ENCODE measurements at regions of chr19 and their contacts with region 1.

Region 1: GRCh38 chr19:13784731-13785452 is 10.4 kb upstream of the ZSWIM4 start:
- DNase-seq: peak; percentile 54 to 86 (median 70)
- ATAC-seq: peak; percentile 63
- H3K4me3 ChIP-seq: peak overlapping the region; percentile 3
- H3K4me3 Mint-ChIP-seq: peak overlapping the region; percentile 71
- H3K27ac ChIP-seq: no peak overlapping the region
- H3K27ac Mint-ChIP-seq: peak overlapping the region; percentile 84
- H3K4me1 ChIP-seq: peaks cover 52% of the 10 kb centered on the region
- H3K4me1 Mint-ChIP-seq: peaks cover 27% of the 10 kb centered on the region
- H3K27me3 ChIP-seq: no peaks in the 10 kb centered on the region
- H3K27me3 Mint-ChIP-seq: no peaks in the 10 kb centered on the region
- CTCF ChIP-seq: peak; percentile 86

Region 2: GRCh38 chr19:13132471-13133180 is 652.3 kb before region 1 on chr19:
- CTCF ChIA-PET with region 1: no interaction called
- POLR2A ChIA-PET with region 1: no interaction called
- intact Hi-C with region 1: no loop called
- DNase-seq: peak in 6 of 14 experiments; percentile 29 to 69 (median 48)
- ATAC-seq: peak; percentile 95
- H3K4me3 ChIP-seq: no peak overlapping the region
- H3K4me3 Mint-ChIP-seq: no peak overlapping the region
- H3K27ac ChIP-seq: peak overlapping the region in 1 of 2 donors; percentile 15
- H3K27ac Mint-ChIP-seq: peak overlapping the region; percentile 80
- H3K4me1 ChIP-seq: peaks cover 24% of the 10 kb centered on the region
- H3K4me1 Mint-ChIP-seq: peaks cover 33% of the 10 kb centered on the region
- H3K27me3 ChIP-seq: no peaks in the 10 kb centered on the region
- H3K27me3 Mint-ChIP-seq: no peaks in the 10 kb centered on the region
- CTCF ChIP-seq: no peak

Region 3: DNA sequence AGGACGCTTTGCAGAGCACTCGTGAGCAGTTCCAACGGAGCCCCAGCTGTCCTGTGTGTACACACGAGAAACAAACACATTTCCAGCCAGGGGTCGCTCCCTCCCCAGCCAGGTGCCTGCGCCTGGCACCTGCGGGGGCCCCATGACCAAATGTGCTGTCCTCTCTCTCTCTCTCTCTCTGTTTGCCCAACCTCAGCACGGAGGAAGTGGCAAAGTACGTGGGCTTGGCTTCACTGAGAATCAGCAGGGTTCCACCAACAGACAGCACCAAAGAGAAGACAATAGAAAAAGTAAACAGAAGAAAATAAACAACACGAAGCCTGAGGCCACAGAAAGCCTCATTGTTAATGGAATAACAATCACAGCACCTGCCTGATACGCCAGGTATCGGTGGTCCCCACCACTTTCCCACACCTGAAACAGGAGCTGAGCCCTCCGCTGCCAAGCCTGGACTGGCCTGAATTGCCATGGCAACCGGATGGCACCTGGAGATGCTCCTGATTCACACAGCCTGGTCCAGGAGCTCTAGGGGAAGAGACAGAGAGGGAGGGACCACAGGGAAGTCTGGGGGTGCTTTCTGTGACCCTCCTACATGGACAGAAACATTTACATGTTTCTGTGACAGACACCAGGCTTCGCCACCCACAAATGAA is 174.7 kb before region 1 on chr19:
- CTCF ChIA-PET with region 1: no interaction called
- POLR2A ChIA-PET with region 1: no interaction called
- intact Hi-C with region 1: no loop called
- DNase-seq: peak in 1 of 14 experiments; percentile 2
- ATAC-seq: no peak
- H3K4me3 ChIP-seq: no peak overlapping the region
- H3K4me3 Mint-ChIP-seq: no peak overlapping the region
- H3K27ac ChIP-seq: no peak overlapping the region
- H3K27ac Mint-ChIP-seq: no peak overlapping the region
- H3K4me1 ChIP-seq: peaks cover 4% of the 10 kb centered on the region
- H3K4me1 Mint-ChIP-seq: peaks cover 9% of the 10 kb centered on the region
- H3K27me3 ChIP-seq: no peaks in the 10 kb centered on the region
- H3K27me3 Mint-ChIP-seq: peaks cover 32% of the 10 kb centered on the region
- CTCF ChIP-seq: no peak

Region 4: DNA sequence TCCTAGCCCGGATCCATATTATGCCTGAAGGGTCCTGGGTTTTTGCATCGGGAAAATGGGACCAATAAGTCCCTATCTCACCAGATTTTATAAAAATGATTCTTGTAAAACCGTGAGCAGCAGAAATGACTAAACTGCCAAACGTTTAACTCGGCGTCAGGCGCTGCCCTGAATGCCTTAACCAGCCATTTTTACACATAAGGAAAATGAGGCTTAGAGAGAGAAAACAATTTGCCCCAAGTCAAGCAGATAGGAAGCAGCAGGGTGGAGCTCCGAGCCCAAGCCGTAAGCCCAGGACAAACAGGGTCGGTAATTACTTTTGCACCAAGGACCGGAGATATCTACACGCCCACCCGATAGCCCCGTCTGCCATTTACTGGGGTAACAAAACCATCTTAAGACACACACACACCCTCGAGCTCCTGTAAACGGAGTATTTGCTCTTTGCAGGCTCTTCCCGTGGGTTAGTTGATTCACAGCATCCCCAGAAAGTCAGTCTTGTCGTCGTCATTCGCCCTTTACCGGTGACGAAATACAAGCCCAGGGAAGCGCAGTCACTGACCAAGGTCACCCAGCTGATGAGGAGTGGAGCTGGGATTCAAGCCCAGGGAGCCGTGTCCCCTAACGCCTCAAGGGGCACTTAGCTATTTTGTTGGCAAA is 36.6 kb before region 1 on chr19:
- CTCF ChIA-PET with region 1: no interaction called
- POLR2A ChIA-PET with region 1: interaction called, 17 read pairs
- intact Hi-C with region 1: no loop called
- DNase-seq: peak in 7 of 14 experiments; percentile 10 to 58 (median 24)
- ATAC-seq: peak; percentile 15
- H3K4me3 ChIP-seq: peak overlapping the region; percentile 98
- H3K4me3 Mint-ChIP-seq: peak overlapping the region; percentile 91
- H3K27ac ChIP-seq: peak overlapping the region; percentile 79 to 95
- H3K27ac Mint-ChIP-seq: peak overlapping the region; percentile 87
- H3K4me1 ChIP-seq: peaks cover 34% of the 10 kb centered on the region
- H3K4me1 Mint-ChIP-seq: peaks cover 30% of the 10 kb centered on the region
- H3K27me3 ChIP-seq: no peaks in the 10 kb centered on the region
- H3K27me3 Mint-ChIP-seq: no peaks in the 10 kb centered on the region
- CTCF ChIP-seq: no peak

Region 5: GRCh38 chr19:13794757-13795589 is 10.1 kb after region 1 on chr19 and contains the start of gene ZSWIM4:
- CTCF ChIA-PET with region 1: interaction called, 3 read pairs
- POLR2A ChIA-PET with region 1: interaction called, 17 read pairs
- intact Hi-C with region 1: no loop called
- DNase-seq: peak; percentile 66 to 97 (median 90)
- ATAC-seq: peak; percentile 85
- H3K4me3 ChIP-seq: peak within 1 kb of the TSS; percentile 70
- H3K4me3 Mint-ChIP-seq: peak within 1 kb of the TSS; percentile 96
- H3K27ac ChIP-seq: peak within 1 kb of the TSS; percentile 59 to 64
- H3K27ac Mint-ChIP-seq: peak within 1 kb of the TSS; percentile 90
- H3K4me1 ChIP-seq: peaks cover 34% of the 10 kb centered on the region
- H3K4me1 Mint-ChIP-seq: peaks cover 40% of the 10 kb centered on the region
- H3K27me3 ChIP-seq: no peaks in the 10 kb centered on the region
- H3K27me3 Mint-ChIP-seq: no peaks in the 10 kb centered on the region
- CTCF ChIP-seq: no peak
- total RNA-seq, gene ZSWIM4: 3.5 to 3.8 TPM

Region 6: DNA sequence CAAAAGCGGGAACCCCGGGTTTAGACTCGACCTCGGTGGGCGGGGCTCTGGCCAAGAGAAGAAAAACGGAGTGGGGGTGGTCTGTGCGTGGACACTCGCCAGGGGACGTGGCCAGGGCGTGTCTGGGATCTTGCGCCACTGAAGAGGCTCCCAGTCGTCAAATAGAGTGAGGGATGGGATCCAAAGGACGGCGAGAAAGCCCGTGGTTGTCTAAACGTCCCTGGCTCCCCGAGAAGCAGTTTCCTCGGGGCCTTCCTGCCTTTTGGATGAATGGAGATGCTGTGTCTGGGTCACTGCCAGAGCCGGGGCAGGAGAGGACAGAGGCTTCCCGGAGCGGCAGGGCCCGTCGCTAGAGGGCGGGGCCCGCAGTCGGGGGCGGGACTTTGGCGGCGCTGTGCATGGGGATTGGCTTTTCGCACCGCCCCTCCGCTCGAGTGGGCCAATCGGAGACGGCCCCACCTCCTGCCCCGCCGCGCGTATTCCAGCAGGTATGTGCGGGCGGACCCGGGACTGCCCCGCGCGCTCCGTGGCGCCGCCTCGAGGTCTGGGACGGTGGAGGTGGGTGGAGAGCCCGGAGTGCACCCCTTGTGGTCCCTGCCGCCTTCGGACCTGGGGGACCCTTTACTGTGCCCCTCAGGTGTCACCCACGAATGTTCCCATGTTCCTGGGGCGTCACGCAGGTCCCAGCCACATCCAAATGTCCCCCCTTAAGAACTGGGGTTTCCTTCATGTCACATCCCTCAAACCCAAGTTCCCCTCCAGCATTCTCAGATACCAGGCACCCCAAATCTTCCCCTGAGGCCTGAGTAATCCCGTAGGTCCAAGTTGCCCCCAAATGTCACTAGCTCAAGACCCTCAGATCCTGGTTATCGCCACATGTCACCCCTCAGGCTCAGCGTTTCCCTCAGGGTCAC is 48.7 kb after region 1 on chr19:
- CTCF ChIA-PET with region 1: interaction called, 5 read pairs
- POLR2A ChIA-PET with region 1: interaction called, 38 read pairs
- intact Hi-C with region 1: loop called in 1 of 2 experiments (anchors 2 kb)
- DNase-seq: peak; percentile 82 to 97 (median 92)
- ATAC-seq: peak; percentile 84
- H3K4me3 ChIP-seq: peak overlapping the region; percentile 61
- H3K4me3 Mint-ChIP-seq: peak overlapping the region; percentile 89
- H3K27ac ChIP-seq: peak overlapping the region; percentile 62 to 76
- H3K27ac Mint-ChIP-seq: peak overlapping the region; percentile 99
- H3K4me1 ChIP-seq: peaks cover 57% of the 10 kb centered on the region
- H3K4me1 Mint-ChIP-seq: peaks cover 38% of the 10 kb centered on the region
- H3K27me3 ChIP-seq: no peaks in the 10 kb centered on the region
- H3K27me3 Mint-ChIP-seq: no peaks in the 10 kb centered on the region
- CTCF ChIP-seq: peak; percentile 18

Region 7: DNA sequence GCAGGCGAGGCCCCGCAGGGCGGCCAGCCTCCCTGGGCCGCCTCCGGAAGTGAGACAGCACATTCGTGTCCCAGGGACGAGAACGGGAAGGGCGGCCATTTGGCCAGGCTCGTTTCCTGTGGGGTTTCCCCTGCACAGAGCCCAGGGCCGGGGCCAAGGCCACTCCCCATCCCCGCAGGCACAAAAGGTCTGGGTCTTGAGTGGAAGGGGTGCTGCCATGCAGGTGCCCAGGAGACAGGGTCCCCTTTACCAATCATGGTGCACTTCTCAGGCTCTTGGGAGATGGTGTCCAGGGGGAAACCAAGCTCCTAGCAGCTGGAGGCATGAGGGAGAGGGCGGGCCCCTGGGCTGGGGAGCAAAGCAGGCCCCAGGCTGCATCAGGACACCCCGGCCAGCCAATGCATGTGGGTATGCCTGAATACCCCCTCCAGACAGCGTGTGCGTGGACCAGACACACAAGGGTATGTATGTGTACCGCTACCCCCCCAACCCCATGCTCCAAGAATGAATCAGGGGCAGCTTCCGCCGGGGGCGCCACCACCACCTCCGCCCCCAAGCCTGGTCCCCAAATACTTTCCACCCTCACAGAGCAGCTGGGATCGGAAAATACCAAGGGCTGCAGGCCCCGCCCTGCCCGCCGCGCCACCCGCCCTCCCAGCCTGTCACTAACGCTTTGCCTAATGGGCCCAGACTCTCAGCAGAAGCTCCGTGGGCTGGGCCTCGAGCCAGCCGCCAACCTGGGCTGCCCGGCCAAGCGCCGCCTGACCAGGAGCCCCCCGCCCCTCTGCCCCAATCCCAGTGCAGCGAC is 54.4 kb after region 1 on chr19:
- CTCF ChIA-PET with region 1: interaction called, 5 read pairs
- POLR2A ChIA-PET with region 1: interaction called, 38 read pairs
- intact Hi-C with region 1: loop called in 1 of 2 experiments (anchors 2 kb)
- DNase-seq: peak in 13 of 14 experiments; percentile 60 to 90 (median 78)
- ATAC-seq: peak; percentile 51
- H3K4me3 ChIP-seq: peak overlapping the region; percentile 73
- H3K4me3 Mint-ChIP-seq: peak overlapping the region; percentile 86
- H3K27ac ChIP-seq: peak overlapping the region; percentile 89 to 97
- H3K27ac Mint-ChIP-seq: peak overlapping the region; percentile 99
- H3K4me1 ChIP-seq: peaks cover 93% of the 10 kb centered on the region
- H3K4me1 Mint-ChIP-seq: peaks cover 69% of the 10 kb centered on the region
- H3K27me3 ChIP-seq: no peaks in the 10 kb centered on the region
- H3K27me3 Mint-ChIP-seq: no peaks in the 10 kb centered on the region
- CTCF ChIP-seq: no peak

Region 8: GRCh38 chr19:13846557-13847406 is 61.9 kb after region 1 on chr19:
- CTCF ChIA-PET with region 1: interaction called, 5 read pairs
- POLR2A ChIA-PET with region 1: interaction called, 28 read pairs
- intact Hi-C with region 1: no loop called
- DNase-seq: peak; percentile 86 to 99 (median 96)
- ATAC-seq: peak; percentile 61
- H3K4me3 ChIP-seq: peak overlapping the region; percentile 76
- H3K4me3 Mint-ChIP-seq: peak overlapping the region; percentile 86
- H3K27ac ChIP-seq: peak overlapping the region; percentile 100
- H3K27ac Mint-ChIP-seq: peak overlapping the region; percentile 99
- H3K4me1 ChIP-seq: peaks cover 86% of the 10 kb centered on the region
- H3K4me1 Mint-ChIP-seq: peaks cover 63% of the 10 kb centered on the region
- H3K27me3 ChIP-seq: no peaks in the 10 kb centered on the region
- H3K27me3 Mint-ChIP-seq: no peaks in the 10 kb centered on the region
- CTCF ChIP-seq: no peak